ENCODE measurements at regions of chr20 and their contacts with region 1.

Region 1: DNA sequence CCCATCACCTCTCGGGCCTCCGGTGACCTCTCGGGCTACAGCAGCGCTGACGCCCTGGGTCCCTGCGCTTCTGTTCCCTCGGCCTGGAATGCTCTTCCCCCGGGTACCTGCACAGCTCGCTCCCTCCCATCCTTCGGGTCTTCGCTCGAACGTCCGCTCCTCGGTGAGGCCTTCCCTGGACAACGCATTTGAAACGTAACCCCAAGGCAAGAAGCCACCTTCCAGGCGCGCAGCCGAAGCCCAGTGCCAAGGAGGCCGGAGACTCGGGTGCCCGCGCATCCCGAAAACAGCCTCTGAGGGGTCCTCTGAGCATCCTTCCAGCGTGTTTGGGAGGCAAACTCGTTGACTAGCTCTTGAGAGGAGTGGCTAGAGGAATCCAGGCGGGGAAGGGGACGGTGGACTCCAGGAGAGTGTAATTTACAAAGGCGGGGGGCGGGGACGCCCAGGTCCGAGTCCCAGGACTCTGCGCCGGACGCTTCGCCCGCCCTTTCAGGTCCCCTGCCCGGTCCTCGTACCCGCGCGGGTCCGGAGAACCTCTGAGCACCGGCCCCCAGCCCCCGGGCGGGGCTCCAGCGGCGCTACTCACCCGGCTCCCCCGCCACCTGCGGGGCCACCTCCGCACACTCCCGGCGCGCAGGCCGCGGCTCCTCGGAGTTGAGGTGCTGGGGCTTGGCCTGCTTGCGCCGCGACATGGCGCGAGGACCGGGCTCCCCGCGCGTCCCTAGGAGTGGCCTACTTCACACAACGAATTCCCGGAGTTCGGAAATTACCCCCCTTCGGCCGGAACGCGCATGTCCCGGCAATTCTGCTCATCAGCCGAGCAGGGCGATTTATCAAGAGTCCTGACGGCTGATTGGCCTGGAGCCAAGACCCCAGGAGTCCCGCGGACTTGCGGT is 86.8 kb downstream of the ZFP64 start:
- DNase-seq: peak; percentile 25 to 86
- H3K4me3 ChIP-seq: peak overlapping the region; percentile 30 to 77 (median 58)
- H3K27ac ChIP-seq: no peak overlapping the region
- H3K4me1 ChIP-seq: peaks cover 0 to 9% (median 5%) of the 10 kb centered on the region in 4 experiments; a peak in 5 of 7 replicates
- H3K27me3 ChIP-seq: peaks cover 10 to 35% (median 30%) of the 10 kb centered on the region in 4 experiments
- CTCF ChIP-seq: no peak
- EP300 ChIP-seq: no peak
- POLR2A ChIP-seq: no peak; a peak in 2 of 3 replicates
- RAD21 ChIP-seq: no peak

Region 2: GRCh38 chr20:52191132-52191915 is 86.5 kb after region 1 on chr20 and contains the start of gene ZFP64:
- CTCF ChIA-PET with region 1: interaction called, 3 read pairs
- POLR2A ChIA-PET with region 1: interaction called, 13 read pairs
- DNase-seq: peak in 1 of 2 experiments; percentile 87
- H3K4me3 ChIP-seq: peak within 1 kb of the TSS; percentile 58 to 87 (median 82)
- H3K27ac ChIP-seq: peak within 1 kb of the TSS; percentile 75
- H3K4me1 ChIP-seq: peaks cover 0 to 7% (median 2%) of the 10 kb centered on the region in 4 experiments; a peak in 4 of 7 replicates
- H3K27me3 ChIP-seq: no peaks in the 10 kb centered on the region
- CTCF ChIP-seq: peak; percentile 43 to 60 (median 55)
- EP300 ChIP-seq: no peak
- POLR2A ChIP-seq: peak in 1 of 2 experiments; percentile 60; a peak in 2 of 3 replicates
- RAD21 ChIP-seq: no peak
- total RNA-seq, gene ZFP64: 25.3 and 26.2 TPM in 2 replicates